Testis (tissue), 5 donors: ENCODE measurements at regions of chr11 and their contacts with region 1.

Region 1: DNA sequence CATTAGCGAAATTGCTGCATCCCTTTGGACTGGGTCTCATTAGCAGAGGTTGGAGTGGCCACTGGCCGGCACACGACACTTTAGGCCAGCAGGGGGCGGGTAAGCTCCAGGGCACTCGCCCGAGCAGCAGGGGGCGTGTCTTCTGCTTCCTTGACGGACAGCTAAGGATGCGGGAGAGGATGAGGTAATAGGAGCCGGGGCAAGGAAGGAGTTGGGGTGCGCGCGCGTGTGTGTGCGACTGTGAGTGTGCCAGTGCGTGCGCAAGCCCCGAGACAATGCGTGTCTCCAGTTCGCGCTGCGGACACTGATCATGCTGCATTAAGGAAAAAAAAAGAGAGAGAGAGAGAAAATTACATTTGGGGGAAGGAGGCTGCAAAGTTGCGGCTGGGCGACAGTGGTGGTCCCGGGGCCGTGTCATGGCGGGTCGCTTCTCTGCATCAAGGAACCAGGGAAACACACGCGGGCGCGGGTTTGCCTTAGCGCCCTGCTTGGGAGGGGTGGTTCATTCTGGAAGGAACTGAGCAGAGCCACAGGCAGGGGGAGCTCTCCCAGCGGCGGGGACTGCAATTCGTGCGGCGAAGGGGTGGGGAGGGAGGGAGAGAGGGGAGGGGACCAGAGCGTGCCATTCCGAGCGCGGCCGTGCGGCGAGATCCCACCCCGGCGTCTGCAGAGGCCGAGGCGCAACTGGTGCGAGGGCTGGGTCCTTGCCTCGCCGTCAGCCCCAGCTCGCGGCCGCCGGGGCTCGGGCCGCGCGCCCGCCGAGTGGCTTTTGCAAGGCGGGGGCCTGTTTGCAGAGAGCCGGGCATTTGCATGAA is at the start of gene DTX4:
- DNase-seq: peak; percentile 97
- H3K4me3 ChIP-seq: peak within 1 kb of the TSS; percentile 69 to 70
- H3K27ac ChIP-seq: peak within 1 kb of the TSS; percentile 37 to 68
- H3K4me1 ChIP-seq: peaks cover 21% of the 10 kb centered on the region
- H3K27me3 ChIP-seq: no peaks in the 10 kb centered on the region
- CTCF ChIP-seq: peak; percentile 83 to 97 (median 95)
- POLR2A ChIP-seq: no peak
- total RNA-seq, gene DTX4: 4.5 to 10.2 TPM

Region 2: DNA sequence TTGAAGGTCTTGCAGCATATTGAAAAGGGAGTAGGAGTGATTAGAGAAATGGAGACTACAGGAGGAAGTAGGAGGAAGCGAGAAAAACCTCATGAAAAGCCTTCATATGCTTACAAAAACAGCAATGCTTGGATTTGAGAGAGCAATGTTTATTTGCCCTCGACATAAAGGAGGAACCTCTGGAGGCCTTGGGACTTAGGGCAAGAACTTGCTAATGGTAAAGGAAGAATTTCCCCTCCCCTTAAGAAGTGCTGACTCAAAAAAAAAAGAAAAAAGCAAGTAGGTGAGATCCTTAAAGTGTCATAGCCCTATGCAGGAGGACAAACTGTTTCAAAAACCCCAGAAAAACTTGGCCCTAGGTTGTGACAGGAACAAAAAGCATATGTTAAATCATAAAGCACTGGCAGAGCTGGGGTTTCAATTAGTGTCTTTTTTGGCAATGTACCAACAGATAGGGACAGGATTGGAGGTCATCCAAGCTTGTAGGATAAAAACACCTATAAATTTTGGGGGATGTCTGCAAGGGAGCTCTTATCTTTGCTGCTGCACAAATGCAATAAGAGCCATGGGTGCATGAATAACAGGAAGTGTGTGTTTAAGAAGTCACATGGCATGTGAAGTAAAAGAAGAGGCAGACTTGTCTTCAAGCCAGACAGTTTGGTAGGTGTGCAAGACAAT is 444.8 kb before region 1 on chr11:
- intact Hi-C with region 1: no loop called
- DNase-seq: no peak
- H3K4me3 ChIP-seq: no peak overlapping the region
- H3K27ac ChIP-seq: no peak overlapping the region
- H3K4me1 ChIP-seq: no peaks in the 10 kb centered on the region
- H3K27me3 ChIP-seq: no peaks in the 10 kb centered on the region
- CTCF ChIP-seq: no peak
- POLR2A ChIP-seq: no peak

Region 3: GRCh38 chr11:59207988-59208451 is 36.3 kb after region 1 on chr11:
- intact Hi-C with region 1: loop called (anchors 5 kb)
- DNase-seq: peak; percentile 71
- H3K4me3 ChIP-seq: no peak overlapping the region
- H3K27ac ChIP-seq: peak overlapping the region in 1 of 2 donors; percentile 50
- H3K4me1 ChIP-seq: peaks cover 14% of the 10 kb centered on the region
- H3K27me3 ChIP-seq: no peaks in the 10 kb centered on the region
- CTCF ChIP-seq: peak; percentile 75 to 78 (median 76)
- POLR2A ChIP-seq: no peak

Region 4: GRCh38 chr11:59283825-59284772 is 112.4 kb after region 1 on chr11:
- intact Hi-C with region 1: loop called (anchors 10 kb)
- DNase-seq: peak; percentile 75
- H3K4me3 ChIP-seq: no peak overlapping the region
- H3K27ac ChIP-seq: no peak overlapping the region
- H3K4me1 ChIP-seq: no peaks in the 10 kb centered on the region
- H3K27me3 ChIP-seq: no peaks in the 10 kb centered on the region
- CTCF ChIP-seq: peak; percentile 80 to 88 (median 84)
- POLR2A ChIP-seq: no peak

Region 5: DNA sequence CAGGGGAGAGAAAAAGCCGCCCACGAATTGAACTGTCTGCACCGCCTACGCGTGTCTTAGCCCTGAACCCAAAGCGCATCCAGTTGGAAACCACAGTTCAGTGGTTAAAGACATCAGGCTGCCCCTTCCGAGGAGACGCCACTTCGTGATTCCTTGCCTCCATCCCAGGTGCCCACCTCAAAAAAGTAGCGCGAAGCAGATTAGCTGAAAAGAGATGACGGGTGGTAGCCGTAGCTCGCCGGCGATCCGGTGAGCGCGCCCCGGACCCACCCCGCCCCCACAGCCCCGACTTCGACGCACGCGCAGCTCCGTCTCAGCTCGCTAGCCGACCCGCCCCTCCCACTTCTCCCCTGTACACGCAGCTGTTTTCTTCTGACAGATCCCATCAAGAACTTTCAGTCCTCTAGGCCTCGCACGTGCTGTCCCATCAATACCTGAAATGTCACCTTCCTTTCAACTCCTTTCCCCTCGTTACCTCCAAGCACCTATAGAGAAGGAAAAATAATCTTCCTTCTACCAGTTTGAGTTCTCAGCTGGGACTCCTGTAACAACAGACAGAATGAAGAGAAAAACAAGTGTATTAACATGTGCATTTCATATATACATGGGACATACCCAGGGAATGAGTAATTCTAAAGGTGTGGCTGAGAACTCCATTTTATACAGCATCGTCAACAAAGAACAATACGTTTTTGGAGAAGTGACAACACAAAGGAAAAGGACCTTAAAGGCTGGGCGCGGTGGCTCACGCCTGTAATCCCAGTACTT is 389.2 kb after region 1 on chr11:
- intact Hi-C with region 1: no loop called
- DNase-seq: peak; percentile 93
- H3K4me3 ChIP-seq: peak overlapping the region; percentile 81 to 89
- H3K27ac ChIP-seq: peak overlapping the region; percentile 85 to 91
- H3K4me1 ChIP-seq: peaks cover 5% of the 10 kb centered on the region
- H3K27me3 ChIP-seq: no peaks in the 10 kb centered on the region
- CTCF ChIP-seq: no peak
- POLR2A ChIP-seq: no peak